ENCODE measurements at regions of chr3 and their contacts with region 1.

Region 1: DNA sequence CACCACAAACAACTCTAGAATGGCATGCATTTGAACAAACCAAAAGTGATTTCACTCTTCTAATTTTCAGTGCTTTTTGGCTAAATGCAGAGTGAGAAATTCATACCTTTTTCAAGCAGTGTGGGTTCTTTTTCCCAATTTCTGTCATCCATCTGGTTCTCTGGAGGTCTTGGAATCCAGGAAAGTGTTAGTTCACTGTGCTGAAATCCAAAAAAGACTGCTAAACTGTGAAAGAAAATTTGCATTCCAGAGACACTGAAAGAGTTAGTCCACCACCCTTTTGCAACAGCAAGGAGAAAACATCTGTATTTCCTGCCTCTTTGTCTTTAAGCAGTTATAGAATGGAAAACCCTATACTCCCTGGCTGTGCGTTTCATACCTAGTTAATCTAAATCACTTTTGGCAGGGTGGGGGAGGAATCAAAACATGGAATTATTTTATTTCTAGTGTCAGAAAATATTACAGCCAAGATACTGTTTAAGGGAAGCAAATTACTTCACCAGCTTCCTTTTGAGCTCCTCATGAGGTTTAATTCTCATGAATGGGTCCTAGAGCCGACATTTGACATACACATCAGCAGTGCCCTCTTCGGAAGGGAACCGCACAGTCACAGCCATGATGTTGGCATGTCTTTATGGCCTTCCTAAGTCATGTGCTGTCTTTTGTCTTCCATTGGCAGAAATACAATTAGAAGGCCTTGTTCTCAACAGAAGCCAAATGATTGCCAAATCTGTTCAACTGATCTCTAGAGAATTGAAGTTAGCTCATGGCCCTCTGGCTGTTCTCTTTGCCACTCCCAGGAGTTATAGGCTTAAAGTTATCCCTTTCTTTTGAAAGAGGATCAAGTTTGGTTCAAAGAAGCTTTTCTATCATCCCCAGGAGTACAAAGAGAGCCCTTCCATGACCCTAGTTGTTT is 317.7 kb upstream of the TPRG1 start:
- DNase-seq: peak; percentile 73
- H3K4me3 ChIP-seq: no peak overlapping the region
- H3K27ac ChIP-seq: peak overlapping the region; percentile 85
- H3K4me1 ChIP-seq: peaks cover 26% of the 10 kb centered on the region
- H3K27me3 ChIP-seq: no peaks in the 10 kb centered on the region
- CTCF ChIP-seq: no peak

Region 2: DNA sequence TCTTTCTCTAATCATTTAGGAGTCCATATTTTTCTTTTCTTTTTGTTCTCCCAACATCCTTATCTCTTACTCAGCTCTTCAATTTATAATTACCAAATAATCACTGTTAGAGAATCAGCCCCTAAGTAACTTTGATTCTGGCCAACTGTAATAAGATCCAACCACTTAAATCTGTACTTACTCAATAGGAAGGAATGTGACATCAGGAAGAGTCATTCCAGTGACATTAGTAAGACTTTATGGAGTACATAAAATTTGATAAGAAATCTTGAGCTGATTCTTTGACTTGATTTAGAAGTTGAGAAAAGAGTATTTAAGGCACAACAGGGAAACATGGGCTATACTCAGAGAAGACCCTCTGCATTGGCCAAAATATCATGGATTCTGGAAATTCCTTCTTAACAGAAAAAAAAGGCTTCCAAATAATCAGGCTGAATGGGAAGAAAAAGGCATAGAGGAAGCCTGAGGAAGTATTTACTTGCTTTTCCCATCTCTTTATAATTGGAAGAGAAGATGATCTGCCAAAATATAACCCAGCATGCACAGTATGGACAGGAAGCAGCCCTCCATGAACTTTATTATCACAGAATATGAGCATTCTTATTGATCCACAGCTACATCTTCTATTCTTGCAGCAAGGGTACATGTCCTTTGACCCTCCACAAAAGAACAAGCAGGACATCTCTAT is 28.0 kb after region 1 on chr3:
- CTCF ChIA-PET with region 1: no interaction called
- dilution Hi-C with region 1: no loop called
- in situ Hi-C with region 1: no loop called
- intact Hi-C with region 1: loop called (anchors 2 kb)
- DNase-seq: peak; percentile 62
- H3K4me3 ChIP-seq: no peak overlapping the region
- H3K27ac ChIP-seq: no peak overlapping the region
- H3K4me1 ChIP-seq: peaks cover 16% of the 10 kb centered on the region
- H3K27me3 ChIP-seq: no peaks in the 10 kb centered on the region
- CTCF ChIP-seq: no peak

Region 3: DNA sequence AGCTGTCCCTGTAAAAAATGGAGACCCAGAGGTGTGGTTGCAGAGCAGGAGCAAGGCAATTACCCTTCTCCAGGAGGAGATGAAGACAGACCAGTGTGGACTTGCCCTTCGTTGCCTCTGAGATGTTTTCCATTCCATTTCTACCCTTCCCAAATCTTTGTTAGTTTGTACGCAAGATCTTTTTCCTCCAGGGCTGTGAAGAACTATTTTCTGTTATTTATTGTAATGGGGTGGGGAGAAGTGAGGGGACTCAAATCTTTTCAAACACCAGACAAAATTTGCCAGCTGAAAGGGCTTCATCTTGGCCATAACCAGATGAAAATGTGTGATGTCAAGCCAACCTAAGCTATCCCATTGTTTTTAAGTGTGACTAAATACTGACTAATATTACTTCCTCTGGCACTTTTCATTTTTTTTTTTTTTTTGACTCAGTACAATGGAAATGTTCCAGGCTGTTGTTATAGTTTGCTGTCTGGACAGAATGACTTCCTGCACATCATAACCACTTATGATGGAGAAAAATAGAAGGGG is 46.4 kb after region 1 on chr3:
- CTCF ChIA-PET with region 1: no interaction called
- dilution Hi-C with region 1: no loop called
- in situ Hi-C with region 1: no loop called
- intact Hi-C with region 1: loop called (anchors 5 kb)
- DNase-seq: peak; percentile 86
- H3K4me3 ChIP-seq: no peak overlapping the region
- H3K27ac ChIP-seq: peak overlapping the region; percentile 92
- H3K4me1 ChIP-seq: peaks cover 31% of the 10 kb centered on the region
- H3K27me3 ChIP-seq: no peaks in the 10 kb centered on the region
- CTCF ChIP-seq: no peak

Measured in mammary epithelial cell (primary cell).